ENCODE measurements at regions of chr4 and their contacts with region 1.

Region 1: GRCh38 chr4:74133786-74134499 is 24.0 kb upstream of the MTHFD2L start:
- DNase-seq: peak; percentile 87

Region 2: GRCh38 chr4:73662709-73663546 is 471.0 kb before region 1 on chr4:
- intact Hi-C with region 1: loop called (anchors 10 kb)
- DNase-seq: no peak

Region 3: DNA sequence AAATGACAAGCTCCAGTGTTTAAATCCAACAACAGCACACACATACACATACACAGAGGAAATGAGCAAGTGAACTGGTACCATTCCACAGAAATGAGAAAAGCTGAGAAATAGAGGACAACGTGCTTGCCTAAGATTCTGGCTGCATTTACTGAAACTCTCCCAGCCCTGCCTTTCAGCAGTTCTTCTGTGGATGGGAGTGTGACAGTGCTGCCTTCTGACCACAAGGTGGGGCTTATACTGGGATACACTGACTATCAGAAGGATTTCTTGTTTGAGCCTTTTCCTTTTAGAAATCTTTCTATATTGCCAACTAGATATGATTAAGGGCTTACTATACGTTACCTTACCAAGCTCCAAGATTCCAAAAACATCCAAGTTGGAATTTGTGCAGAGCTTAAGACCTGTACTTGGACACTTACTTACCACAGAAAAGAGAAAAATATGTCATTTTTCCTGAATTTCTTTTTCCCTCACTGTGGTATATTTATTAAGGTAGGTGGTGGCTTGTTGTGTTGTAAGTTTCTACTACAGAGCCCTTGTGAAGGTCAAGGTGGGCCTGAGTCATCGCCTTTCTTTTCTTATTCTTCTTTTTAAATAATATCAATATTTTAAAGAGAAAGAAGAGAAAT is 404.3 kb before region 1 on chr4:
- intact Hi-C with region 1: loop called in 1 of 2 experiments (anchors 5 kb)
- DNase-seq: peak; percentile 81

Region 4: DNA sequence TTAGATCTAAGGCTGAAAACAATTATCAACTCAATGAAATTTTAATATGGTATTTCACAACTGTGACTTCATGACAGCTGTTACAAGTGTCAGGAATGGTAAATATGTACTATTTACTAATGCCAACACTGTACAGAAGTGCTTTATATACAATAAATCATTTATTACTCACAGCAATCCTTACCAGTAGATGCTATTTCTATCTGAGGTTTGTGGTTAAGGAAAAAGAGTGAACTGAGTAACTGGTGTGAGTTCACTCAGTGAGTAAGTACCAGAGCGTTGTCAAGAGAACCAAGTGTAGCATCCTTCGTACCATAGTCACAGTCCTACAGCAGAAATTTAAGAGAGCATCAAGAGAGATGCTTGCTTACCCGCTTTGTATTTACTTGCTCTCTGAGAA is 47.3 kb after region 1 on chr4:
- intact Hi-C with region 1: no loop called
- DNase-seq: no peak

Measured in posterior vena cava (tissue), 2 donors.